Common myeloid progenitor, CD34-positive (primary cell): ENCODE measurements at regions of chr11 and their contacts with region 1.

Region 1: GRCh38 chr11:83249972-83250593 is 36.1 kb downstream of the CCDC90B start:
- DNase-seq: peak; percentile 45 to 72 (median 69)
- H3K4me3 ChIP-seq: no peak overlapping the region
- H3K27ac ChIP-seq: no peak overlapping the region
- H3K4me1 ChIP-seq: no peaks in the 10 kb centered on the region
- H3K27me3 ChIP-seq: no peaks in the 10 kb centered on the region

Region 2: GRCh38 chr11:82906244-82906654 is 343.8 kb before region 1 on chr11:
- CTCF ChIA-PET with region 1: interaction called, 14 read pairs
- POLR2A ChIA-PET with region 1: no interaction called
- DNase-seq: peak in 2 of 3 donors; percentile 51 to 55
- H3K4me3 ChIP-seq: no peak overlapping the region
- H3K27ac ChIP-seq: no peak overlapping the region
- H3K4me1 ChIP-seq: peaks cover 3 to 14% (median 11%) of the 10 kb centered on the region in 4 experiments
- H3K27me3 ChIP-seq: no peaks in the 10 kb centered on the region

Region 3: DNA sequence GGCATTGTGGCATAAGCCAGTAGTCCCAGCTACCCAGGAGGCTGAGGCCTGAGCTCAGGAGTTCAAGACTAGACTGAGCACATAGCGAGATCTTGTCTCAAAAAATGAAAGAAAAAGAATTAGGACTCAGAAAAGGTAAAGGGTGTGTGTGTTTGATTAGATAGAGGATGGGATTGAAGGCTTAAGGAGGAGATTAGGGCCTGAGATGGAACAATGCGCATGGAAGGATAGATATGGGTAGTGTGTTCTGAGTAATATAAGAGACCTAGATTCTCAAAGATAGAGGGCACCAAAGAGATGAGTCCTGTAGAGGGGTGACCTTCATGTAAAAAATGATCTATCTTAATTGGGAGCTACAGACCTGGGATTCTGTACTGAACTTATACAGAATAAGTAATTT is 161.1 kb before region 1 on chr11:
- CTCF ChIA-PET with region 1: interaction called, 10 read pairs
- POLR2A ChIA-PET with region 1: no interaction called
- DNase-seq: no peak
- H3K4me3 ChIP-seq: no peak overlapping the region
- H3K27ac ChIP-seq: no peak overlapping the region
- H3K4me1 ChIP-seq: no peaks in the 10 kb centered on the region
- H3K27me3 ChIP-seq: no peaks in the 10 kb centered on the region

Region 4: DNA sequence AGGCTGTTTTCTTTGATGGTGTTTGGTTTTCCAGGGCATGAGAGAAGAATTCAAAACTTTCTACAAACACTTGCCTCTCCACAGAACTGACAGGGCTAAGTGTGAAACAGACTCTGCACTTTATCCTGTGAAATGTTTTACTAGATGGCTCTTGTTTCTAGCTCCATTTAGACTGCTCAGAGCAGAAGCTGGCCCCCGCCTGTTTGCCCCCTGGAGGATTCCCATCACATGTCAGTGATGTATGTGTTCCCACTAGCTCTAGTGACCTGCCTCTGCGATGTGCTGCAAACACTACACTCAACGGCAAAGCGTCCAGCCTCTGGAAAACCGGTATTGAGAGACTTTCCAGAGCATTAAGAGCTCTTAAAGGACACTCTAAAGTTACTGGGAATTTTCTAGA is 134.5 kb before region 1 on chr11:
- CTCF ChIA-PET with region 1: no interaction called
- POLR2A ChIA-PET with region 1: no interaction called
- DNase-seq: no peak
- H3K4me3 ChIP-seq: no peak overlapping the region
- H3K27ac ChIP-seq: no peak overlapping the region
- H3K4me1 ChIP-seq: peaks cover 3 to 17% (median 9%) of the 10 kb centered on the region in 4 experiments
- H3K27me3 ChIP-seq: no peaks in the 10 kb centered on the region